Astrocyte of the cerebellum (primary cell): ENCODE measurements at regions of chr14 and their contacts with region 1.

Region 1: DNA sequence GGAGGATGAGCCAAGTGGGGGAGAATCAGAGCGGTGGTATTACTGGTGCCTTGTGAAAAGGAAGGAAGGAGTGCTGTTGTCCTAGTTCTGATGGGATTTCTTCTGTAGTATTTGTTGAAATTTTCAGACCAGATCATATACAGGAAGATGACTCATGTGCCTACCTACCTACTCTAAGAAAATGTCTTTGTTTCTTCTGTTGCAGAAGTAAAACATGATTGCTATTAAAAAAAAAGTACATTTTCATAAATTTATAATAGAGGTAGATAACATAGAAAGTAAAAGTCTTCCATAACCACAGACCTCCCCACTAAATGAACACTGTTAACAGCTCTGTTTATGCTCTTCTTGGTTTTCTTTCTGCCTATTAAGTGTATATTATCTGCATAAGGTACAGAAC is 26.9 kb downstream of the SAMD4A start:
- DNase-seq: no peak
- H3K4me3 ChIP-seq: no peak overlapping the region
- CTCF ChIP-seq: no peak

Region 2: GRCh38 chr14:54642801-54643697 is 49.2 kb after region 1 on chr14:
- in situ Hi-C with region 1: loop called (anchors 5 kb)
- DNase-seq: no peak
- H3K4me3 ChIP-seq: no peak overlapping the region
- CTCF ChIP-seq: peak; percentile 44